ENCODE measurements at regions of chr1 and their contacts with region 1.

Region 1: GRCh38 chr1:247103859-247104591 is at the start of gene ZNF669:
- DNase-seq: peak; percentile 97
- ATAC-seq: peak; percentile 100
- H3K4me3 ChIP-seq: peak within 1 kb of the TSS; percentile 64 to 95 (median 90)
- H3K27ac ChIP-seq: peak within 1 kb of the TSS in 9 of 10 donors; percentile 76 to 91 (median 84)
- H3K4me1 ChIP-seq: peaks cover 0 to 21% (median 14%) of the 10 kb centered on the region in 9 donors
- H3K27me3 ChIP-seq: no peaks in the 10 kb centered on the region
- CTCF ChIP-seq: no peak
- total RNA-seq, gene ZNF669: 2.1 to 4.7 (median 3.5) TPM

Region 2: DNA sequence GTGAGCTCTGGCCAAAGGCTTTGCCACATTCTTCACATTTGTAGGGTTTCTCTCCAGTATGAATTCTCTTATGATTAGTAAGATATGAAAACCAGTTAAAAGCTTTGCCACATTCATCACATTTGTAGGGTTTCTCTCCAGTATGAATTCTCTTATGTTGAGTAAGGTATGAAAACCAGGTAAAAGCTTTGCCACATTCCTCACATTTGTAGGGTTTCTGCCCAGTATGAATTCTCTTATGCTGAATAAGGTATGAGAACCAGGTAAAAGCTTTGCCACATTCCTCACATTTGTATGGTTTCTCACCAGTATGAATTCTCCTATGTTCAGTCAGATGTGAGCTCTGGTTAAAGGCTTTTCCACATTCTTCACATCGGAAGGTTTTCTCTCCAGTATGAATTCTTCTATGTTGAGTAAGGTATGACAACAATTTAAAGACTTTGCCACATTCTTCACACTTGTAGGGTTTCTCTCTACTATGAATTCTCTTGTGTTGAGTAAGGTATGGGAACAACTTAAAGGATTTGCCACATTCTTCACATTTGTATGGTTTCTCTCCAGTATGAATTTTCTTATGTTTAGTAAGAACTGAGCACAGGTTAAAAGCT is 116.8 kb before region 1 on chr1:
- intact Hi-C with region 1: no loop called
- DNase-seq: no peak
- ATAC-seq: no peak
- H3K4me3 ChIP-seq: no peak overlapping the region
- H3K27ac ChIP-seq: no peak overlapping the region
- H3K4me1 ChIP-seq: no peaks in the 10 kb centered on the region
- H3K27me3 ChIP-seq: no peaks in the 10 kb centered on the region
- CTCF ChIP-seq: no peak

Region 3: DNA sequence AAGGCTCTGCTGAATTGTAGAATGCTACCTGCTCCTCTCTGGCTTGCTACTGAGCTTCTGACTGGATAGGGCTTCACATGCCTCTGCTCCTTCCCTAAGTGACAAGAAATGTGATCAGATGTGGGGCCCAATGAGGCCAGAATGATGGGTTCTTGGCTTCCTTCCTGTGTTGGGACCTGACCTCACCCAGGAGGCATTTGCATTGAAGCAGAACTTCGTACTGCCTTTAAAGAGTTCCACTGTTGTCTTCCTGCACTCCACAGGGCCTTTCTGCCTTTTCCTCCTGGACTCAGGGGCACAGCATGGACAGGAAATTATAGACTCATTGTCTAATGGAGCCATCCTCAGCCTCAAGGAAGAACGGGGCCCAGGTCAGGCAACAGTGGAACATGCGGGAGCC is 39.7 kb before region 1 on chr1:
- intact Hi-C with region 1: no loop called
- DNase-seq: no peak
- ATAC-seq: no peak
- H3K4me3 ChIP-seq: no peak overlapping the region
- H3K27ac ChIP-seq: no peak overlapping the region
- H3K4me1 ChIP-seq: peaks cover 0 to 9% (median 0%) of the 10 kb centered on the region in 9 donors
- H3K27me3 ChIP-seq: no peaks in the 10 kb centered on the region
- CTCF ChIP-seq: no peak

Region 4: GRCh38 chr1:247204177-247204647 is 100.2 kb after region 1 on chr1:
- intact Hi-C with region 1: no loop called
- DNase-seq: no peak
- ATAC-seq: peak in 6 of 8 donors; percentile 37 to 69 (median 55)
- H3K4me3 ChIP-seq: no peak overlapping the region
- H3K27ac ChIP-seq: peak overlapping the region in 3 of 10 donors; percentile 13 to 46 (median 42)
- H3K4me1 ChIP-seq: peaks cover 0 to 39% (median 22%) of the 10 kb centered on the region in 9 donors
- H3K27me3 ChIP-seq: no peaks in the 10 kb centered on the region
- CTCF ChIP-seq: no peak

Region 5: DNA sequence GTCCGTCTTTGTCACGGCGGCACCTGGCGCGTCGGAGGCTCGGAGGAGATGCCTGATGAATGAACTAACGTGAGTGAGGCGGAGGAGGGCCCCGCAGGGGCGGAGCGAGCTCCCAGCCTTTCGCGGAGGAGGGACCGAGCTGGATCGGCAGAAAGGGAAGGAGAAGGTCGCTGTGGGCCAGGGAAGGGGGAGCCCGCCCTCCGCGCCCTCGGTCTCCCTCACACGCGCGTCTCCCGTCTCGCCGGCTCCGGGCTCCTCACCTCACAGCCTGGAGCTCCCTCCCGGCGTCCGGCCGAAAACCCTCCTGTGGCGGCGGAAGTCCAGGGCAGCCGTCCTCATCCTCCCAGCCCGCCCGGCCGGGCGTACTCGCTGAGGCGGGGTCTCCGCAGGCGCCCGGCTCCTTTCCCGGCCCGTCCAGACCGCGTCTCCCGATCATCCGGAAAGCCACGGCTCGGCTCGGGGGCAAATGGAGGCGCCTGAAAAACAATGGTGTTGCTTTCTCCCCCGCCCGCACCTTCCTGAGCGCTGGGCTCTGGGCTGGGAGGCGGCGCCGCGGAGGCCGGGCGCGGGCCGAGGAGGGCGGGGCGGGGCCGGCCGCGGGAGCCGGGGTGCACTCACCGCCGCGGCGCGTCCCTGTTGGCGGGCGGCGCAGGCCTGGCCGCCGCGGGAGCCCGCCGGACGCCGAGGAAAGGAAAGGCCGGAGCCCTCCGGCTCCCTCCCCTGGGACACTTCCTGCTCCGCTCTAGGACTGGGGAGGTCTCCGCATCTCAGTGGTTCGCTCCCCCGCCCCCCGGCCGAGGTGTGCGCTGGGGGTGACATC is 227.4 kb after region 1 on chr1 and contains the start of gene ZNF496:
- intact Hi-C with region 1: loop called in 3 of 10 experiments (anchors 2 to 10 kb)
- DNase-seq: peak; percentile 83 to 86
- ATAC-seq: peak; percentile 72 to 87 (median 82)
- H3K4me3 ChIP-seq: peak within 1 kb of the TSS; percentile 69 to 98 (median 94)
- H3K27ac ChIP-seq: peak within 1 kb of the TSS; percentile 59 to 97 (median 94)
- H3K4me1 ChIP-seq: peaks cover 5 to 58% (median 40%) of the 10 kb centered on the region in 9 donors
- H3K27me3 ChIP-seq: no peaks in the 10 kb centered on the region
- CTCF ChIP-seq: no peak
- total RNA-seq, gene ZNF496: 11.4 to 18.4 (median 14.5) TPM

Measured in heart right ventricle (tissue), 16 donors.